ENCODE measurements at regions of chr2 and their contacts with region 1.

Region 1: DNA sequence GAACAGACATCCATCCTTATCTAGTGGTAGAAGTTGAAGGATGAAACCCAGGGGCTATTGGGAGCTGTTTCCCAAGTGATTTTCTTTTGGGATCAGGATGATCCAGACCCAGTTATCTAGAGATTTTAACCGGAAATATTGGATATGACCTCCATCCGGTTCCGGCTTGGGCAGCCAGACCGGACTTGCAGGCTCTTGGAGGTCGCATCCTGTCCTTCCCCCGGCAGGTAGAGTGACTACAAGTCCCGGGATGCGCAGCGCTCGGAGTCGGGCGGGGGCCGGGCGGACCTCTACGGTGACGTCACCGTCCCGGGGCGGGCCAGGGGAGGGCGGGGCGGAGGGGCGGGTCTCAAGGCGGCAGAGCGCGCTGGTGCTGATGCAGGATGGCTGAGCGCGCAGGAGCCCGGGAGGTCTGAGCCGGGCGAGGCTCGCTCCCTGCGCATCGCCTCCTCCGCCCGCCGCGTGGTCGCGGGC is at the start of gene KIF5C:
- DNase-seq: peak; percentile 77
- H3K4me3 Mint-ChIP-seq: peak within 1 kb of the TSS; percentile 91
- H3K27ac Mint-ChIP-seq: peak within 1 kb of the TSS; percentile 83
- H3K4me1 Mint-ChIP-seq: peaks cover 19% of the 10 kb centered on the region
- H3K27me3 Mint-ChIP-seq: peaks cover 18% of the 10 kb centered on the region
- total RNA-seq, gene KIF5C: 17.9 and 20.7 TPM in 2 replicates

Region 2: GRCh38 chr2:148020111-148021058 is 854.5 kb before region 1 on chr2 and contains the start of gene ORC4:
- intact Hi-C with region 1: loop called (anchors 1 kb)
- DNase-seq: peak; percentile 95
- H3K4me3 Mint-ChIP-seq: peak within 1 kb of the TSS; percentile 98
- H3K27ac Mint-ChIP-seq: peak within 1 kb of the TSS; percentile 95
- H3K4me1 Mint-ChIP-seq: peaks cover 40% of the 10 kb centered on the region
- H3K27me3 Mint-ChIP-seq: no peaks in the 10 kb centered on the region
- total RNA-seq, gene ORC4: 29.2 and 34.2 TPM in 2 replicates

Region 3: DNA sequence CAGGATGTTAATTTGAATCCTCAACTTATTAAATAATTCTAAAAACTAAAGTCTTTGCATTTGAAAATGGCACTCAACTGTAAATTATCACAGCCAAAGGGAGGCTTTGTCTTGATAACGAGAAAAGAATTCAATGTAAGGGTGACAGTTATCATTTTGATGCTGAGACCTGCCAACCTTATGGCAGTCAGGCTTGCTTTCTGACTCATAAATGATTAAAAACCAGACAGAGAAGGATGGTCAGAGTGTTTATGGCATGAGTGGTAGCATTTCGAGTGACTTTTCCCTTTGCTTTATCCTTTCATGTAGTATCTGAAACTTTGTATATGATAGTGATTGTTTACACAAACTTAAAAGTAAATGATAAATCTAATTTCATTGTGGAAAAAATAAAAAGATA is 284.3 kb before region 1 on chr2:
- intact Hi-C with region 1: no loop called
- DNase-seq: no peak
- H3K4me3 Mint-ChIP-seq: no peak overlapping the region
- H3K27ac Mint-ChIP-seq: no peak overlapping the region
- H3K4me1 Mint-ChIP-seq: no peaks in the 10 kb centered on the region
- H3K27me3 Mint-ChIP-seq: peaks cover 9% of the 10 kb centered on the region

Region 4: GRCh38 chr2:148813603-148814065 is 61.3 kb before region 1 on chr2:
- intact Hi-C with region 1: loop called (anchors 5 kb)
- DNase-seq: peak; percentile 43
- H3K4me3 Mint-ChIP-seq: no peak overlapping the region
- H3K27ac Mint-ChIP-seq: no peak overlapping the region
- H3K4me1 Mint-ChIP-seq: peaks cover 11% of the 10 kb centered on the region
- H3K27me3 Mint-ChIP-seq: peaks cover 13% of the 10 kb centered on the region

Region 5: GRCh38 chr2:148887350-148888002 is 12.6 kb after region 1 on chr2:
- intact Hi-C with region 1: loop called (anchors 1 kb)
- DNase-seq: no peak
- H3K4me3 Mint-ChIP-seq: peak overlapping the region; percentile 74
- H3K27ac Mint-ChIP-seq: no peak overlapping the region
- H3K4me1 Mint-ChIP-seq: peaks cover 16% of the 10 kb centered on the region
- H3K27me3 Mint-ChIP-seq: peaks cover 14% of the 10 kb centered on the region

Region 6: DNA sequence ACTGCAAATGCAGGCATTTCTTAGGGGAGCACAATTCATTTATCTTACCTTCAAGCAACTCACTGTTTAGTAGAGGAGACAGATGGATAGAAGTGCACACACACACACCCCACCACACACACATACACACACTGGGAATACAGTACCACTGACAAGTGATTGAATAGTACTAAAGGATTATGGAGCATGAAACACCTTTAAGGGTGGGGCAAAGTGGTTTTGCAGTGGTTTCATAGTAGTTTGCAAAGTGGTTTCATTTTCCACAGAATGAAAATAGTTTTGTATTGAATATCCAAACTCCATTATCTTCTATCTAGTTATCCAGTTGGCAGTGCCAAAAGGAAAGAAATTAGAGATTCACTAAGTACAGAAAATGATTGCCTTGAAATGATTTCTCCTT is 19.0 kb after region 1 on chr2:
- intact Hi-C with region 1: loop called (anchors 1 kb)
- DNase-seq: no peak
- H3K4me3 Mint-ChIP-seq: no peak overlapping the region
- H3K27ac Mint-ChIP-seq: no peak overlapping the region
- H3K4me1 Mint-ChIP-seq: peaks cover 9% of the 10 kb centered on the region
- H3K27me3 Mint-ChIP-seq: peaks cover 2% of the 10 kb centered on the region

Region 7: DNA sequence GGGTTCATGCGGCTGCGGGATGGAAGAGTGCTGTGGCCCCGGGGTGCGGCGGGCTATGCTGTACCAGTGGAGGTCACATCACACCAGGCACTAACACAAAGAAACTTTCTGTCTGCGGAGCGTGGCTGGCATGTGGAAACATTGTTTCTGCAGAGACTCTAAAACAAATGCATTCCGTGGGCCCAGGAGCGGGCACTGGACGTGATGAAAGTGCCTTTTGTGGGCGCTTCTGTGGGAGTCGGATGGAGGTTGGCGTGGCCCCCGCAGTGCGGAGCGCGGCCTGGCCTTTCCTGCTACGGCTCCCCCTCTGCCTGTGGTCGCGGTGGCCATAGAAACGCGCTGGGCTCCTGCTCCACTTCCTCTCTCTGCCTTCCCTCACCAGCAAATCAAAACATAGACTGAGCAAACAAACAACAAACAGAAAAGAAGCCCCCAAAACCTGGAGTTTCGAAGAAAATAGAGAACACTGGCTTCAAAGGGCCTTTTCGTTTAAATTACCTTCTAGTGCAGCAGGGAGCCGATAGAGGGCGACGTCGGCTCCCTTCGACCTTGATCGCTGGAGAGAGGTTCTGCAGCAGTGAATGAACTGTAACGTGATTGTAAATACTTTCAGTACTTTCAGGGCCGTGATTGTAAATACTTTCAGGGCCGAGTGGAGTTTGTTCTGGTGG is 51.5 kb after region 1 on chr2:
- intact Hi-C with region 1: loop called (anchors 1 kb)
- DNase-seq: peak; percentile 52
- H3K4me3 Mint-ChIP-seq: peak overlapping the region; percentile 87
- H3K27ac Mint-ChIP-seq: peak overlapping the region; percentile 86
- H3K4me1 Mint-ChIP-seq: peaks cover 26% of the 10 kb centered on the region
- H3K27me3 Mint-ChIP-seq: no peaks in the 10 kb centered on the region

Region 8: DNA sequence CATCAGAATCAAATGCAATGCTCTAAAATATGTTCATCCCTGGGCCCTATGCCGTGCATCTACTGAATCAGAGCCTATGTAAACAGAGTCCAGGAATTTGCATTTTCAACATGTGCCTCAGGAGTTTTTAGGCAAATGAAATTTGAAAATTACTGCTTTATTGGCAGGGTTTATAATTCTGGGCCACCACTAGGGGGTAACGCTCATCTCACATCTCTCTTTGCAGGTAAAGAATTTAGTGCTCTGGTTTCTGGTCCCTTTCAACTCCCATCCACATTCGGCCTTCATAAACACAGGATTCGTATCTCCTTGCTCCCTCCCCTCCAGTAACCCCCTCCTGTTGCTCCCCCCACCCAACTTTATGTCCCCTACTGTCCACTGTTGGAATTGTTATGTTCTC is 212.8 kb after region 1 on chr2:
- intact Hi-C with region 1: no loop called
- DNase-seq: no peak
- H3K4me3 Mint-ChIP-seq: no peak overlapping the region
- H3K27ac Mint-ChIP-seq: no peak overlapping the region
- H3K4me1 Mint-ChIP-seq: no peaks in the 10 kb centered on the region
- H3K27me3 Mint-ChIP-seq: peaks cover 15% of the 10 kb centered on the region

Measured in activated T-helper 1 cell treated with anti-CD3 and anti-CD28 coated beads, Interleukin-12 subunit alpha, Interleukin-12 subunit beta, Interleukin-2, Interleukin-4 antibody, amounts not matched to agents 30 ng/mL and 10 ng/mL and 1 ng/mL, durations not matched to agents 14 hours and 24 hours and 36 hours (primary cell).